ENCODE measurements at regions of chr20 and their contacts with region 1.

Region 1: DNA sequence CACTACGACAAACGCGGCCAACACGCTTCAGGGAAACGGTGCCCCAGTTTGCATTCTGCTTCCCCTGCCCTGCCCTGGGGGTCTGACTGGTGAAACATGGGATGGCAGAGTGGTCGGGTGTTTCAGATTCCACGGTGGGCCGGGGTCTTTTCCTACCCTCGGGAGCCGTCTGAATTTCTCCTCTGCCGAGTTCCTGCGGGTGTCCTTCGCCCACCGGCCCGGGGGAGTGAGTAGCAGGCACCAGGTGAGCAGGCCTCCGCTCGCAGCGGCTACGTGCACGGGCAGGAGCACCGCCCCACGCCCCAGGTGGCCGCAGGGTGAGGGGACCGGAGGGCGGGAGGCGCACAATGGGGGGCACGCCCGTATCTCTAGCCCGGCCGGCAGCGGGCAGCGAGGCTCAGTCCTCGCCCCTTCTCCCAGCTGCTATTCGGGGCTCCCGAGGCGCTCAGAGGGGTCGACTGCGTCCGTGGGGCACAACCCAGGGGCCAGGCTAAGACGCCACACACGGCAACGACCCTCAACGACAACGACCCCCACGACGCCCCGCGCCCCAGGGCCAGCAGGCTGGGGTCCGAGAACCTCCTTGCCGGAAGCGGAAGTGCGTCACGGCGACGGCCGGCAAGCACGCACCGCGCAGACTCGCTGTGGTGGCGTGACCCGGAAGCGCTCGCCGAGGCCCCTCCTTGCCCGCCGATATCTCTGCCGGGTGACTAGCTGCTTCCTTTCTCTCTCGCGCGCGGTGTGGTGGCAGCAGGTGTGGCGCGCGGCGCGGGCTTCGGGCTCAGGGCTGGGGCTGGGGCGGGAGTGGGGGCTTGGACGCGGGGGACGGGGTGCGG is at the start of gene RPS21:
- DNase-seq: peak; percentile 92
- H3K4me3 Mint-ChIP-seq: peak within 1 kb of the TSS; percentile 93
- H3K27ac Mint-ChIP-seq: peak within 1 kb of the TSS; percentile 87
- H3K4me1 Mint-ChIP-seq: peaks cover 39% of the 10 kb centered on the region
- H3K27me3 Mint-ChIP-seq: no peaks in the 10 kb centered on the region
- total RNA-seq, gene RPS21: 1,907 and 1,920 TPM in 2 replicates

Region 2: DNA sequence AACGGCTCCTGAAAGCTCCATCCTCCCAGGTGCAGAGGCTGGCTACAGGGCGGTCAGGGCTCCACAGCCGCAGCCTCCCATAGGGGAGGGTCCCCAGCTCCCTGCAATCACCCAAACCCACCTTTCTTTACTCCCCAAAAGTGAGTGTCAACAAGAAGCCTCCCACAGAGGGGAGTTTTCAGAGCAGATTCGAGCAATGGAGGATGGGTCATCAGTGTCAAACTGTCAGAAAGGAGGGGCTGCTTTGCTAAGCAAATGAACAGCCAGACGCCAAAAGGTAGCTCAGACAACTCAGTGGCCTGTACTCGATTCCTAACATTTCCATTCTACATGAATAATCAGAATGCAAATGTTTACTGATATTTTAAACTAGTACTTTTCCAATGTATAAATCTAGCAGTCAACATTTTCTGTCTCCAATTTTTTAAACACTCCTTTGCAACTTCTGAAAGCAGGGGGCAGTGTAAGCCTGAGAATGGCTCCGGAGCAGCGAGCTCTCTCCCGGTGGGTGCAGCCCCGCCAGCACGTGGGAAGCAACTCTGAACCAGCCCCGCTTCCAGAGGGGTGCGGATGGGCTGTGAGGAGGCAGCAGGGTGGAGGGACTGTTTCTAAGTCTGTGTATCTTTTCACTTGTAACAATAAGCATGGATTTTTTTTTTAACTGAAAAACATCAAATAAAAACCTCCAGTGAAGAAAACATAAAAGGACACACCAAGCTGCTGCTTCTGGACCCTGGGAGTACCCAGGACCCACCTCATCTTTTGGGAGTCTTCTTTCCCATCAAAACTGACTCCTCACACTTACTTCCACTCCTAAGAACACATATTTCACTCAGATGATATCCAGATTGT is 375.8 kb before region 1 on chr20:
- intact Hi-C with region 1: loop called (anchors 1 kb)
- DNase-seq: peak; percentile 34
- H3K4me3 Mint-ChIP-seq: no peak overlapping the region
- H3K27ac Mint-ChIP-seq: no peak overlapping the region
- H3K4me1 Mint-ChIP-seq: peaks cover 8% of the 10 kb centered on the region
- H3K27me3 Mint-ChIP-seq: no peaks in the 10 kb centered on the region

Region 3: DNA sequence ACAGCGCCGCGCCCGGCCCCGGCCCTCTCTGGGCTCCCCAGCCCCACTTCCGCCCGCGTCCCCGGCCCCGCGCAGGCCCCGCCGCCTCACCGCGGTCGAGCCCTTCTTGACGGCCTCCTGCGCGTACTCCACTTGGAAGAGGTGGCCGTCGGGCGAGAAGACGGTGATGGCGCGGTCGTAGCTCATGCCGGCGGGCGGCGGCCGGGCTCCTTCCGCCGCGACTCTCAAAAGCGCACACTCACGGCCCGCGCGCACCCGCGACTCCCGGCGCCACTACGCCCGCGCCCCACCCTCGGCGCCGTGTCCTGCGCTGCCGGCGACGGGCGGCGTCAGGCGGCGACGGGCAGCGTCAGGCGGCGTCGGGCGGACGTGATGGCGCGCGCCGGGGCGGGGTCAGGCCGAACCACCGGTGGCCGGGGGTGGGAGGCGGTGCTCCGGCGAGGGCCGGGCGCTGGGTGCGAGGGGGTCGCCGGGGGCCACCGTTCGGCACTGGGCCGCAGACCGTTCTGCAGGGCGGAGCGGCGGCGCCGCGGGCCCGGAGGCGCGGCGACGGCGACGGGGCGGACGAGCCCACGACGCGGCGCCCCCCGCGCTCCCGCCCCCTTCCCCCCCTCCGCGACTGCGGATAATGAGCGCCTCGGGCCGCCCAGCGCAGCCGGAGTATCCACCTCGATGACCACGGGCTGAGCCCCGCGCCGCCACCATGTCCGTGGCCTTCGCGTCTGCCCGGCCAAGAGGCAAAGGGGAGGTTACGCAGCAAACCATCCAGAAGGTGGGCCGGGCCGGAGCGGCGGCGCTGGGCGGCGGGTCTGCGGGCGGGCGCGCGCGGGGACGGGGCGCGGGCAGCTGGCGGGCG is 243.3 kb before region 1 on chr20 and contains the starts of genes PSMA7 and SS18L1:
- intact Hi-C with region 1: loop called (anchors 5 kb)
- DNase-seq: peak; percentile 84
- H3K4me3 Mint-ChIP-seq: peak within 1 kb of the TSS; percentile 90
- H3K27ac Mint-ChIP-seq: peak within 1 kb of the TSS; percentile 91
- H3K4me1 Mint-ChIP-seq: peaks cover 39% of the 10 kb centered on the region
- H3K27me3 Mint-ChIP-seq: no peaks in the 10 kb centered on the region
- total RNA-seq, gene PSMA7: 444 and 450 TPM in 2 replicates
- total RNA-seq, gene SS18L1: 24.3 and 29.4 TPM in 2 replicates

Region 4: DNA sequence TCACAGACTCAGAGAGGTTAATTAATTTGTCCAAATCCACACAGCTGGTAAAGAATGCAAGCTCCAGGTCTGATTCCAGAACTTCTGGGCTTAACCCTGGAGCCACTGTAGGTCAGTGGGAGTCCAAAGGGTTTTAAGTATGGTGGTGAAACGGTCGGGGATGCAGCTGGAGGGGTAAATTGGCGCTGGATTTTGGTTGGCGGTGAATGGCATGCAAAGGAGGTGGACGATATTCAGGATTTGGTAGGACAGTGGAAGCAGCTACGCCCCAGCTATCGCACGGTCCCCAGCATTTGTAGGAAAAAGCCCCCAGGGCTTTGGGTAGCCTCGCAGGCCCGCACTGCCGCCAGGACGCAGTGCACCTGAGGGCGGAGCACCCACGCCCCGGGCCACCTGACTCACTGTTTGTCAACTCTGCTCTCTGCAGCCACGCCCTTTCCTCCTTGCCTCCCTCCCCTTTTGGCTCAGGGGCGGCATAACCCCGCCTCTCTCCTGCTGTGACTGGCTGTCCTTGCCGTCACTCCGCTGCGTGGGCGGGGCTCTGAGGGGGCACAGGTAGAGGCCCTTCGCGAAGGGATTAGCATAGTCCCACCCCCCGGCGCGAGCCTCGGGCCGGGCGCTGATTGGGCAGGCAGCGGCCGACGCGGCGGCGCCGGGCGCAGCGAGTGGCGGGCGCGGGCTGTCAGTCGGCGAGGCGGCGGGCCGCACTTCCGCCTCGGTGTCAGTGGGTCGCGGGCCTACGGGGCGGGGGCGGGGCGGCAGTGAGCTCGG is 148.6 kb before region 1 on chr20 and contains the start of gene OSBPL2:
- intact Hi-C with region 1: loop called (anchors 1 kb)
- DNase-seq: peak; percentile 100
- H3K4me3 Mint-ChIP-seq: peak within 1 kb of the TSS; percentile 85
- H3K27ac Mint-ChIP-seq: peak within 1 kb of the TSS; percentile 58
- H3K4me1 Mint-ChIP-seq: peaks cover 16% of the 10 kb centered on the region
- H3K27me3 Mint-ChIP-seq: no peaks in the 10 kb centered on the region
- total RNA-seq, gene OSBPL2: 27.0 and 31.6 TPM in 2 replicates

Region 5: DNA sequence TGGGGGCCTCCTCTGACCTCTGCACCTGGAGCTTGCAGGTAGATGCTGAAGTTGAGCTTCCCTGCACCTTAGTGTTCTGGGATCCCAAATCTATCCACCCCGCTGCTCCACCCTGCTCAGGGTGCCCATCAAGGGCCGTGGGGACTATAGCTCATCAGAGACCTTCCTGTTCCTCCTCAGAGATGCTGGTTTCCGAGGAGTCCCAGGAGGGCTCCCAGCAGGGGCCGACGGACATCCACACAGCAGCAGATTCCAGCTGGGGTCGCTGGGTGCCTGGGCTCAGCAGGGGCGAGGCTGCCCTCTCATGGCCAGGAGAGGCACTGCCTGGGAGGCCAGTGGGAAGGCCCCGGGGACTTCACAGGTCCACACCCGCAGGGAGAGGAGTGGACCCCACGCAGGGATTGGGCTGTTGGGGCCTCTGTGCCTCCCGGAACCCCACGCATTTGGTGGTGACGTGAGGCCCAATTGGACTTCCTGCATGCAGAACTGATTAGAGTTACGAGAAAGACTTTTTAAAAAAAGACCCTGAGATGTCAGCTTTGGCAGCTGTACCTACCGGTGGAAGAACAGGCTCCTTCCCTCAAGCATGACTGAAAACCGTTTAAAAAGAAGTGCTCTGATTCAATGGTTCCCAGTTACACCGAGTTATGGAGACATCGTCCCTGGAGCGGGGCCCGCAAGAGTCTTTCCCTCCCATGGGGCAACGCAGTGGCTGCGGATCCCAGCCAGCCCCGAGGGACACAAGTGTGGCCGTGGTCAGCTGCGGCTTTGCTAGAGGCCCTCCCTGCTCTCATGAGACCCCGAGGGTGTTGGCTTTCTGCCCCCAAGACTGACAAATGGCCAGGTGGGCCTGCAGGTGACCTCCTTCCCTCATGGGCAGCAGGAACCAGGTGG is 230.4 kb after region 1 on chr20:
- intact Hi-C with region 1: loop called (anchors 10 kb)
- DNase-seq: peak; percentile 63
- H3K4me3 Mint-ChIP-seq: peak overlapping the region; percentile 81
- H3K27ac Mint-ChIP-seq: peak overlapping the region; percentile 96
- H3K4me1 Mint-ChIP-seq: peaks cover 28% of the 10 kb centered on the region
- H3K27me3 Mint-ChIP-seq: peaks cover 9% of the 10 kb centered on the region

Region 6: GRCh38 chr20:62786157-62786556 is 399.6 kb after region 1 on chr20:
- intact Hi-C with region 1: no loop called
- DNase-seq: no peak
- H3K4me3 Mint-ChIP-seq: no peak overlapping the region
- H3K27ac Mint-ChIP-seq: no peak overlapping the region
- H3K4me1 Mint-ChIP-seq: peaks cover under 1% of the 10 kb centered on the region
- H3K27me3 Mint-ChIP-seq: peaks cover 8% of the 10 kb centered on the region

Region 7: DNA sequence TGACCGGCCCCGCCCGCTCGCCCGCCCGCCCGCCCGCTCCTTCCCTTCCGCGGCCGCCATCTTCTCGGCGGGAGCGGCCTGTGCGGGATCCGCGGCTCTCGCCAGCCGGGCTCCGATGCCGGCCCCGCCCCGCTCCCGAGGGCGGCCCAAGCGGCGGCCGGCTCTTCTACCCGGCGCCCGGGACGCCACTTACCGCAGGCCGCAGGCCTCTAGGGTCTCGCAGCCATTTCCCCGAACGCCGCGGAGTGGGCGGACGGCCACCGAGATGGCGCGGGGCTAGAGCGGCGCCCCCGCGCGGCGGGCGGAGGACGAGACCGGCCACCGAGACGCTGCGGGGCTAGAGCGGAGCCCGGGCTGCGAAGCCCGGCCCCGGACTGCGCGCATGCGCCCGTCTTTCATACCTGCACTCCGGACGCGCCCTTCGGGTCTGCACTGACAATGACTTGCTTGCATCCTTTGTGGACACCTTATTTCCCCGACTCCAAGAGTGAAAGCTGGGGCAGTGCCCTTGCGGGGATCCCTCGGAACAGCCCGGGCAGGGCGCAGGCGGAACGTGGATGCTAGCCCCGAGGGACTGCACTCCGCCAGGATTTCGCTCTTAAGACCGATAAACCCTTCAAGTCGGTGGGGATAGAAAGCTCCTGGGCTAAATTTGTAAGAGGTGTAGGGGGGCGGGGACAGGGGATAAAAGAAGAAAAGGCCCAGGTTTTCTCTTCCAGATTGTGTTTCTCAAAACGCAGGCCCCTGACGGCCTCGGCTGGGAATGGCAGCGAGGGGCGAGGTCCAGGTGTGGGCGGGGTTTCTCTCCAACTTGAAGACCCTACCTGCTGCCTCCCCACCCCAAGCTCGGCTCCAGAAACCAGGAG is 539.9 kb after region 1 on chr20 and contains the start of gene DIDO1:
- intact Hi-C with region 1: loop called (anchors 5 kb)
- DNase-seq: peak; percentile 88
- H3K4me3 Mint-ChIP-seq: peak within 1 kb of the TSS; percentile 91
- H3K27ac Mint-ChIP-seq: peak within 1 kb of the TSS; percentile 91
- H3K4me1 Mint-ChIP-seq: peaks cover 70% of the 10 kb centered on the region
- H3K27me3 Mint-ChIP-seq: no peaks in the 10 kb centered on the region
- total RNA-seq, gene DIDO1: 60.5 and 60.8 TPM in 2 replicates